WTC11 (cell line): ENCODE measurements at regions of chr4 and their contacts with region 1.

Region 1: GRCh38 chr4:6873792-6874461 is 35.7 kb upstream of the TBC1D14 start:
- DNase-seq: peak; percentile 81
- ATAC-seq: peak; percentile 87
- H3K4me3 Mint-ChIP-seq: no peak overlapping the region
- H3K27ac Mint-ChIP-seq: no peak overlapping the region; the same call in 1 of the 2 replicates
- H3K4me1 Mint-ChIP-seq: 0 out of 2 replicates have a peak, but pooled peaks cover 2% of the 10 kb centered on the region
- H3K27me3 Mint-ChIP-seq: no peaks in the 10 kb centered on the region
- CTCF ChIP-seq: peak; percentile 61

Region 2: DNA sequence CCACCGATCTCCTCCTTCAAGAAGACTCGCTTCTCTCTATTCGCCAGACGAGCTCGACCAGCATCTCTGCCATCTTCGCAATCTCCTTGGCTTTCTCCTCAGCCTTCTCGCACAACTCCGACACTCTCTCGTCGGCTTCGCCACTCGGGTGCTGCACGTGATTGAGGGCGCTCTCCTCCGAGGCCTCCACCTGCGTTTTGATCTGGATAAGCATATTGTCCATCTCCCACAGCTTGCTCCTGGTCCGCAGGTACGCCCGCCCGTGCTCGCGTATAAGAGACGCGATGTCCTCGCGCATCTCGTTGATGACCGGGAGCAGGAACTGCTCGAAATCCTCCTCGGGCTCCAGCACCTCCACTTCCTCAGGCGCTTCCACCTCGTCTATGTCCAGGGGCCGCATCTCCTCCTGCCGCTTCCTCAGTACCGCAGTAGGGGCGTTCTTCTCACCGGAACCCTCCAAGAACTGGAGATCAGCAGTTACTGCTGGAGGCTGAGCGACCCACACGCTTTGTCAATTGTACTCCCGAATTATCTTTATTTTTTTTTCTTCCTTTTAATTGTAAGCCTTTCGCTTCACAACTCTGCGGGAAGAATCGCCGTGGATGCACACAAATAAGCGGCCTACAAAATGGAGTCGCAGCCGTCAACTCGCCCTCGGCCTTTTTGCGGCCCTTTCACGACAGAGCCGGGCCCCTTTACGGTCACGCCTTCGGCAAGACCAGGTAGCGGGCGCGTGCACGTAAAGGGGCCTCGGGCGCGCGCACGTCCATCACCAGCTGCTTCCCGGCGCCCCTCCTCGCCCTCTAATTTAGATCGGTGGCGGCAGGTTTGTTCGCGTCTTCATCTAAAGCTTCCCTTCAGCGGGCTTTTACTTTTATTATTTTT is 164.5 kb before region 1 on chr4 and contains the start of gene MRFAP1L1:
- CTCF ChIA-PET with region 1: interaction called, 10 read pairs
- POLR2A ChIA-PET with region 1: no interaction called
- DNase-seq: peak; percentile 98
- ATAC-seq: peak; percentile 82
- H3K4me3 Mint-ChIP-seq: peak within 1 kb of the TSS; percentile 98
- H3K27ac Mint-ChIP-seq: peak within 1 kb of the TSS; percentile 98
- H3K4me1 Mint-ChIP-seq: peaks cover 27% of the 10 kb centered on the region
- H3K27me3 Mint-ChIP-seq: peaks cover 29% of the 10 kb centered on the region
- CTCF ChIP-seq: no peak; the same call in 1 of the 2 replicates
- total RNA-seq, gene MRFAP1L1: 52.0 to 56.9 TPM (median 54.4 TPM) in 3 replicates

Region 3: GRCh38 chr4:6730603-6731317 is 143.2 kb before region 1 on chr4:
- CTCF ChIA-PET with region 1: interaction called, 13 read pairs
- POLR2A ChIA-PET with region 1: no interaction called
- DNase-seq: no peak
- ATAC-seq: no peak; the same call in 1 of the 2 replicates
- H3K4me3 Mint-ChIP-seq: no peak overlapping the region
- H3K27ac Mint-ChIP-seq: 0 out of 2 replicates have a peak overlapping the region, but pooled peaks have one; percentile 23
- H3K4me1 Mint-ChIP-seq: peaks cover 16% of the 10 kb centered on the region
- H3K27me3 Mint-ChIP-seq: no peaks in the 10 kb centered on the region; the same call in 1 of the 2 replicates
- CTCF ChIP-seq: no peak

Region 4: GRCh38 chr4:6783053-6783981 is 90.6 kb before region 1 on chr4:
- CTCF ChIA-PET with region 1: interaction called, 13 read pairs
- POLR2A ChIA-PET with region 1: interaction called, 4 read pairs
- DNase-seq: peak; percentile 92
- ATAC-seq: peak; percentile 68
- H3K4me3 Mint-ChIP-seq: peak overlapping the region; percentile 73
- H3K27ac Mint-ChIP-seq: no peak overlapping the region
- H3K4me1 Mint-ChIP-seq: peaks cover 42% of the 10 kb centered on the region
- H3K27me3 Mint-ChIP-seq: peaks cover 6% of the 10 kb centered on the region
- CTCF ChIP-seq: no peak

Region 5: DNA sequence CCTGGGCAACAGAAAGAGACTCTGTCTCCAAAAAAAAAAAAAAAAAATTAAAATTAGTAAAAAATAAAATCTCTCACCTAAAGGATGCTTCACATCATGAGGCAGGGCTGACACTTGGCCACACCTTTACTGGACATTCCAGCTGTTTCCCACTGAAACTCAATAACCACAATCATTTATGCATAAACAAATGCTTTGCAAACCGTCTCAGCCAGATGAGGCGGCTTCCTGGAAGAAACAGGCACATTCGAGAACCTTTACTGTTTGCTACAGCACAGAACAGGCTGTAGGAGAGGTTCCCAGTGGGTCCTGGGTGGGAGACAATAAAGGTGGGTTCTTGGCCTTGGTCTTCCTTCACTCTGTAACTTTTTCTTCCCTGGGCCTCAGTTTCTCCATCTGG is 24.8 kb after region 1 on chr4:
- CTCF ChIA-PET with region 1: interaction called, 13 read pairs
- POLR2A ChIA-PET with region 1: no interaction called
- DNase-seq: no peak
- ATAC-seq: no peak
- H3K4me3 Mint-ChIP-seq: no peak overlapping the region
- H3K27ac Mint-ChIP-seq: no peak overlapping the region
- H3K4me1 Mint-ChIP-seq: no peaks in the 10 kb centered on the region
- H3K27me3 Mint-ChIP-seq: no peaks in the 10 kb centered on the region
- CTCF ChIP-seq: no peak

Region 6: DNA sequence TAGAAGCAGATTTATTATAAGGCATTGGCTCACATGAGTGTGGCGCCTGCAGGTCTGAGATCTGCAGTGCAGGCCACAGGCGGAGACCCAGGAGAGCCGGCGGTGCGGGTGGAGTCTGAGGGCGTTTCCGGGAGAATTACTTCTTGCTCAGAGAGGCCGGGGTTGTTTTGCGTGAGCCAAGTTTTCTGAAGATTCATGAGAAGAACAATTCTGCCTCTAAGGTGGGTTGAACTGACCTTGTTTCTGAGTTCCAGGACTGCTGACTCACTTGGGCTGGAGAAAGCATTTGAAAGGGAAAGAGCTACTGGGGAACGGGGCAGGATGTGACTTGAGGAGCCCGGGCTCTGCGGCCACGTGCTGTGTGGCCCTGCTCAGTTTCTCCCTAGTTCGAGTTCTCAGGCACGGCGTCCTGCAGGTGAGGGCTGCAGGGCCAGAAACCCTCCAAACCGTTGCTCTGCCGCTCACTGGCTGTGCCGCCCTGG is 281.7 kb after region 1 on chr4:
- CTCF ChIA-PET with region 1: no interaction called
- POLR2A ChIA-PET with region 1: no interaction called
- DNase-seq: no peak
- ATAC-seq: no peak
- H3K4me3 Mint-ChIP-seq: no peak overlapping the region
- H3K27ac Mint-ChIP-seq: no peak overlapping the region
- H3K4me1 Mint-ChIP-seq: 0 out of 2 replicates have a peak, but pooled peaks cover 7% of the 10 kb centered on the region
- H3K27me3 Mint-ChIP-seq: no peaks in the 10 kb centered on the region; the same call in 1 of the 2 replicates
- CTCF ChIP-seq: no peak